Breast epithelium (tissue), 4 donors: ENCODE measurements at regions of chr13 and their contacts with region 1.

Region 1: GRCh38 chr13:102020611-102021216 is 381.1 kb downstream of the FGF14 start:
- DNase-seq: no peak
- H3K4me3 ChIP-seq: no peak overlapping the region
- H3K27ac ChIP-seq: no peak overlapping the region
- H3K4me1 ChIP-seq: no peaks in the 10 kb centered on the region
- H3K27me3 ChIP-seq: no peaks in the 10 kb centered on the region
- CTCF ChIP-seq: no peak
- POLR2A ChIP-seq: no peak

Region 2: DNA sequence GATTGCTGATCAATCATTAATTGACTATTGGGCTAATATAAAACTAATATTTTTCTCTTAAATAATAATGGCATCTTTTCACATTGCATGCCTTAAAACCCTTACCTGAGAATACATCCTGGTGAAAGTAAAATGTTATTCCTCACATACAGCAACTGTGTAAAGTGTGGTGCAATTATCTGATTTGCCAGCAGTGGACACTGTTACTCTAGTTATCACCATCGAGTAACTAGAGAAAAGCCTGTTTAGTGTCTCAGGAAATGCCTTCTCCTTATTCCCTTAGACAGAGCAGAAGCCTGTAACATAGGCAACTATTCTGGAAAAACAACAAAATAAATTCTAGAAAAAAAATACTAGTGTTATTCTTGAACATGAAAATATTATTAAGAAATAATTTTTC is 78.7 kb before region 1 on chr13:
- intact Hi-C with region 1: no loop called
- DNase-seq: no peak
- H3K4me3 ChIP-seq: no peak overlapping the region
- H3K27ac ChIP-seq: no peak overlapping the region
- H3K4me1 ChIP-seq: no peaks in the 10 kb centered on the region
- H3K27me3 ChIP-seq: no peaks in the 10 kb centered on the region
- CTCF ChIP-seq: peak; percentile 52 to 64 (median 53)
- POLR2A ChIP-seq: no peak

Region 3: GRCh38 chr13:102097708-102098107 is 77.0 kb after region 1 on chr13:
- intact Hi-C with region 1: loop called (anchors 2 kb)
- DNase-seq: no peak
- H3K4me3 ChIP-seq: no peak overlapping the region
- H3K27ac ChIP-seq: no peak overlapping the region
- H3K4me1 ChIP-seq: no peaks in the 10 kb centered on the region
- H3K27me3 ChIP-seq: no peaks in the 10 kb centered on the region
- CTCF ChIP-seq: no peak
- POLR2A ChIP-seq: no peak

Region 4: GRCh38 chr13:102935896-102936321 is 915.2 kb after region 1 on chr13:
- intact Hi-C with region 1: loop called (anchors 5 kb)
- DNase-seq: no peak
- H3K4me3 ChIP-seq: no peak overlapping the region
- H3K27ac ChIP-seq: no peak overlapping the region
- H3K4me1 ChIP-seq: no peaks in the 10 kb centered on the region
- H3K27me3 ChIP-seq: no peaks in the 10 kb centered on the region
- CTCF ChIP-seq: no peak
- POLR2A ChIP-seq: no peak